Spleen (tissue), 13 donors: ENCODE measurements at regions of chr18 and their contacts with region 1.

Region 1: DNA sequence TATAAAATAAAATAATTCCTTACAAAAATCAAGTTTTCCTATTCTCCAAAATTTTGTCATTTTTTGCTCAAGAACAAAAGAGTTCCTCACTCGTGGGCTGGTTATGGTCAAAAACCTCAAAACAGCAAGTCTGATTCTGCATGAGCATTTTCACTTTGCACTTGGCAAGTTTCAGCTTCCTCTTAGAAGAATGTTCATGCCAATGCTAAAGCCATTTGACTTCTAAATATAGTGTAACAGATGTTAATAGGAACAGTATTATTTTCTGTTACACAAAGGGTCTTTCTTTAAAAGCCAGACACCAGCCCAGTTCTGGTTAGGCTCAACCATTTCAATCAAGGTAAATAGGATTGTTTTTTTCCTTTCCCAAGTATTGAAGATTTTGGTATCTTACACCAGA is 261.3 kb upstream of the CCDC68 start:
- DNase-seq: no peak
- H3K4me3 ChIP-seq: no peak overlapping the region
- H3K27ac ChIP-seq: peak overlapping the region in 2 of 8 donors; percentile 13 to 37
- H3K4me1 ChIP-seq: peaks cover 6 to 23% (median 11%) of the 10 kb centered on the region in 6 donors
- H3K27me3 ChIP-seq: no peaks in the 10 kb centered on the region
- CTCF ChIP-seq: no peak
- POLR2A ChIP-seq: no peak

Region 2: GRCh38 chr18:55781481-55781957 is 561.0 kb after region 1 on chr18:
- intact Hi-C with region 1: loop called (anchors 10 kb)
- DNase-seq: no peak
- H3K4me3 ChIP-seq: no peak overlapping the region
- H3K27ac ChIP-seq: no peak overlapping the region
- H3K4me1 ChIP-seq: peaks cover 0 to 42% (median 10%) of the 10 kb centered on the region in 6 donors
- H3K27me3 ChIP-seq: peaks cover 0 to 17% (median 6%) of the 10 kb centered on the region in 7 donors
- CTCF ChIP-seq: peak in 9 of 11 experiments; percentile 29 to 70 (median 51)
- POLR2A ChIP-seq: no peak